ENCODE measurements at regions of chr5 and their contacts with region 1.

Region 1: GRCh38 chr5:149317281-149318048 is 27.8 kb upstream of the GRPEL2 start:
- H3K4me3 ChIP-seq: no peak overlapping the region
- H3K27ac ChIP-seq: no peak overlapping the region
- H3K4me1 ChIP-seq: peaks cover 8% of the 10 kb centered on the region; the same call in 1 of the 2 replicates
- CTCF ChIP-seq: peak; percentile 59; the same call in 1 of the 2 replicates

Region 2: GRCh38 chr5:149345147-149345875 is 27.8 kb after region 1 on chr5 and contains the start of gene GRPEL2:
- CTCF ChIA-PET with region 1: interaction called, 5 read pairs
- POLR2A ChIA-PET with region 1: interaction called, 24 read pairs
- H3K4me3 ChIP-seq: peak within 1 kb of the TSS; percentile 94
- H3K27ac ChIP-seq: peak within 1 kb of the TSS; percentile 67
- H3K4me1 ChIP-seq: no peaks in the 10 kb centered on the region
- CTCF ChIP-seq: no peak

Region 3: DNA sequence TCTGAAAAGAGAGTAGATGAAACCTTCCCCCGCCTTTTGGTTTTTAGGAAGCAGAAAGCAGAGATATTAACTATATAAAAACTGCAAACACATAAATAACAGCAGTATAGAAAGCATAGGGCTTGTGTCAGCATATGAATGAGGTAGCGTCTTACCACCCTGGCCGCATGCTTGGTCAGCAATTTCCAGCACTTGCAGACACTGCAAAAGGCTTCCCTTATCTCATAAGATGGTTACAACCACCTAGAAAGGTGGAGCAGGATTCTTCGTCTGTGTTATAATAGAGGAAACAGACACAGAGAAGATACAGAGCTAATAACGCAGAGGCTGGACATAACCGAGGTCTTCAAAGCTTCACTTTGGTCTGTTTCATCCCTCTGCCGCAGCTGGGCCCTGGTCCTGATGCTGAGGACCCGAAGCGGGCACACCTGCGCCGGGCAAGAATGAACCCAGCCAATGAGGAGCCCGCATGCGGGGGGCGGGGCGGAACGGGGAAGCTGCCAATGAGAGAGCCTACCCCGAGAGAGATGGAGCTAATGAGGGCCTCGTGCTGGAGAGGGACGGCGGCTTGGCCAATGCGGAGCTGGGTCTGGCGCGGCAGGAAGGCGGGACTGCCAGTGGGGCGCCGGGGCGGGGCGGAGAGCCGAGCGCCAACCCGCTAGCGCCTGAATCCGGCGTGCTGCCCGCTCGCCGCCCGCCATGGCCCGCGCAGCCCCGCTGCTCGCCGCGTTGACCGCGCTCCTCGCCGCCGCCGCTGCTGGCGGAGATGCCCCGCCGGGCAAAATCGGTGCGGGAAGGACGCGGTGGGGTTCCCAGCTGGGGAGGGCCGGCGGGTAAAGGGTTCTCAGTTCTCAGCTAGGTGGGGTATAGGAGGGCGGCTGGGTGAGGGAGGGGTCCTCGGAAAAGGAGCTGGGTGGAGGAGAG is 40.2 kb after region 1 on chr5 and contains the start of gene PCYOX1L:
- CTCF ChIA-PET with region 1: interaction called, 5 read pairs
- POLR2A ChIA-PET with region 1: interaction called, 11 read pairs
- H3K4me3 ChIP-seq: peak within 1 kb of the TSS; percentile 78
- H3K27ac ChIP-seq: peak within 1 kb of the TSS; percentile 61; the same call in 1 of the 2 replicates
- H3K4me1 ChIP-seq: no peaks in the 10 kb centered on the region
- CTCF ChIP-seq: no peak

Region 4: DNA sequence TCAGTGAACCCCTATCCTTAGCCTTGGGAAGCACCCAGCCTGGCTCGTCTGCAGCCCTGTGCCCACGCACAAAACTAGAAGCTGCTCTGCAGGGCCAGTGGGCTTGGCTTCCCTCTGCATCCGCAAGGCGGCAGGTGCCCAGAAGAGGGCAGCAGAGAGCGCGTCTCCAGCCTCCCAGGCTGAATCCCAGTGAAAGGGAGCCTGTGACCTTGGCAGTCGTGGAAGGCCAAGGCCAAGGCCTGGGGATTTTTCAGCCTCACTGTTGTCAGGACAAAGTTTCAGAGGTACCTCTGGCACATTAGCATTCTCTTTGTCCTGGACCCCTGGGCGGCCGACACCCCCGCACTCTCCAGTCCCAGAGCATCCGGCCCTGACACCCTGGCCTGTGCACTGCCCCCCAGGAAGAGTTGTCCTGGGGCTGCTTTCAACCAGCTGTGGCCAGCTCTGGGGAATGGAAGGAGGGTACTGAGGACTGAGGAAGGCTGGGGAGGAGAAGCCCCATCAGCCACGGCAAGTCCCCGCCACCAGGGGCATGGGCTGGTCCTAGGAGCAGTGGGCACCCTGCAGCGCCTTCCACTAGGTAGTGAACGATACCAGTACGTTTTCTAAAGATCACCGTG is 125.2 kb after region 1 on chr5:
- CTCF ChIA-PET with region 1: interaction called, 10 read pairs
- POLR2A ChIA-PET with region 1: interaction called, 3 read pairs
- H3K4me3 ChIP-seq: no peak overlapping the region
- H3K27ac ChIP-seq: no peak overlapping the region
- H3K4me1 ChIP-seq: no peaks in the 10 kb centered on the region
- CTCF ChIP-seq: peak; percentile 88

Measured in HEK293 (cell line).